ENCODE measurements at regions of chr1 and their contacts with region 1.

Region 1: GRCh38 chr1:212477014-212477679 is 44.4 kb downstream of the NENF start:
- DNase-seq: peak; percentile 88 to 91
- H3K4me3 ChIP-seq: no peak overlapping the region
- H3K4me3 Mint-ChIP-seq: no peak overlapping the region
- H3K27ac Mint-ChIP-seq: no peak overlapping the region
- H3K4me1 ChIP-seq: peaks cover 5% of the 10 kb centered on the region
- H3K4me1 Mint-ChIP-seq: peaks cover 7% of the 10 kb centered on the region
- H3K27me3 ChIP-seq: no peaks in the 10 kb centered on the region
- H3K27me3 Mint-ChIP-seq: no peaks in the 10 kb centered on the region
- CTCF ChIP-seq: peak; percentile 94 to 95

Region 2: GRCh38 chr1:212495766-212496494 is 18.8 kb after region 1 on chr1:
- CTCF ChIA-PET with region 1: no interaction called
- POLR2A ChIA-PET with region 1: no interaction called
- intact Hi-C with region 1: no loop called
- DNase-seq: no peak
- H3K4me3 ChIP-seq: no peak overlapping the region
- H3K4me3 Mint-ChIP-seq: no peak overlapping the region
- H3K27ac Mint-ChIP-seq: no peak overlapping the region
- H3K4me1 ChIP-seq: peaks cover 5% of the 10 kb centered on the region
- H3K4me1 Mint-ChIP-seq: peaks cover 7% of the 10 kb centered on the region
- H3K27me3 ChIP-seq: no peaks in the 10 kb centered on the region
- H3K27me3 Mint-ChIP-seq: no peaks in the 10 kb centered on the region
- CTCF ChIP-seq: no peak

Region 3: GRCh38 chr1:212566522-212567479 is 89.7 kb after region 1 on chr1:
- CTCF ChIA-PET with region 1: interaction called, 5 read pairs
- POLR2A ChIA-PET with region 1: interaction called, 5 read pairs
- intact Hi-C with region 1: loop called (anchors 2 kb)
- DNase-seq: peak in 1 of 2 experiments; percentile 40
- H3K4me3 ChIP-seq: peak overlapping the region; percentile 24
- H3K4me3 Mint-ChIP-seq: peak overlapping the region; percentile 80
- H3K27ac Mint-ChIP-seq: peak overlapping the region; percentile 54
- H3K4me1 ChIP-seq: peaks cover 4% of the 10 kb centered on the region; the same call in 1 of the 2 replicates
- H3K4me1 Mint-ChIP-seq: peaks cover 16% of the 10 kb centered on the region
- H3K27me3 ChIP-seq: no peaks in the 10 kb centered on the region
- H3K27me3 Mint-ChIP-seq: no peaks in the 10 kb centered on the region
- CTCF ChIP-seq: no peak